ENCODE measurements at regions of chr2 and their contacts with region 1.

Region 1: DNA sequence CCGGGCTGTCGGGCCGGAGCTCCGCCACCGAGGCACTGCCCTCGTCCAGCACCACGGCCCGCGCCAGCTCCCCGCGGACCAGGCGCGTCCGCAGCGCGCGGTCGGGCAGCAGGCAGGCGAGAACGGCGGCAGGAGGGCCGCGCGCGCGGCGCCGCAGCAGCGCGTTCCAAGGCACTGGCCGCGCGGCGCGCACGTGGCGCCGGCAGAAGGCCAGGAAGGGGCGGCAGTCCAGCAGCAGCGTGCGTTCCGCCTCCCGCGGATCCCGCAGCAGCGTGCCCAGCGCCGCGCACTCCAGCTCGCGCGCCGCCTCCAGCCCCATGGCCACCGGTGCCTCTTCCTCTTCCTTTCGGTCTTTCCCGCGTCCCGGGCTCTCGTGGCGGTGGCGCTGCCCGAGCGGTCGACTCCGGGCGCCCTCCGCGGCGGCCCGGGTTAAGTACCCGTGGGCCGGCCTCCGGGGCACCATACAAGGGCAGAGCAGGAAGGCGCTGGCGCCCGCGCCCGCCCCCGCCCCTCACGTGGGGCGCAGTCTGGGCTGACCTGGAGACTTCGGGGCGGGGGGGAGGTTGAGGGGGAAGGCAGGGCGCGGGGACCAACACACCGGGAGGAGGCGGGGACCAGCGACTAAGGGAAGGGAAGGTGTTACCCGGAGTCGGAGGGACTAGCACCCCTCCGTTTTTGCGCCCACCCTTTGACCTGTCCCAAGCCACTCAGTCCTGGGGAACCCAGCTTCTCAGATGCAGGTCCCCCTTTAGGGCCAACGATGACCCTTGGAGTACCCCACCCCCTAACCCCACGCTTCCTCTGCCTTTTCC is at the start of gene DUSP2:
- DNase-seq: peak; percentile 83
- H3K4me3 Mint-ChIP-seq: peak within 1 kb of the TSS; percentile 95
- H3K27ac Mint-ChIP-seq: peak within 1 kb of the TSS; percentile 97
- H3K4me1 Mint-ChIP-seq: peaks cover 49% of the 10 kb centered on the region
- H3K27me3 Mint-ChIP-seq: no peaks in the 10 kb centered on the region
- total RNA-seq, gene DUSP2: 238 and 260 TPM in 2 replicates

Region 2: GRCh38 chr2:95578539-95578938 is 566.7 kb before region 1 on chr2:
- intact Hi-C with region 1: no loop called
- DNase-seq: no peak
- H3K4me3 Mint-ChIP-seq: no peak overlapping the region
- H3K27ac Mint-ChIP-seq: no peak overlapping the region
- H3K4me1 Mint-ChIP-seq: no peaks in the 10 kb centered on the region
- H3K27me3 Mint-ChIP-seq: peaks cover 36% of the 10 kb centered on the region

Region 3: DNA sequence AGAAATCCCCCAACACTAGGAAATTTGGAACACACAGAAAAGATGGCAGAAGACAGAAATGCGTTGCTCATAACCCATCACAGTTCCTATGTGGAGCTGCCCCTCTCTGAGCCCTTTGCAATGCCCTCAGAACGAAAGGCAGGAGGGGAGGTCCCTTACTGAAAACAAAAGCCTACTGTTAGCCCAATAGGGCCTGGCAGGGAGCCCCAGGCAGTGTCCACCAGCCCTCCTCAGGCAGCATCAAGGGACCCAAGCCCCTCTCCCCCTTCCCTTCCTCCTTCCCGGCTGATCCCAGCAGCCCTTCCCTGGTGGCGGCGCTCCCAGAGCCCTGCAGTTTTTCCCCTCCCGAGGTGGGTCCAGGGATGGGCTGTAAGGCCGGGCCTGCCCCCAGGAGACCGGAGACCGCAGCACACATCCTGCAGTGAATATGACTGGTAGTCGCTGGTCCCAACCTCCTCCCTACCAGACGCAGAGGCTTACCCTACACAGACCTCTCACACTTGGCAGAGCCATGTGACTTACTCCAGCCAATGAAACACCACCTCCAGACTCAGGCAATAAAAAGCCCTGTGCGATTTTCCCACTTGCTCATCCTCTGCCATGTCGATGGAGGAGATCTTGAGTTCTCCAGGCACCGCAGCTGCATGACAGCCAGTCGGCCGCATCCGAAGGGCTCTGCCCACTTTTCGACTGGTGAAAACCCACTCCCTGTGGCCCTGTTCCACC is 19.4 kb after region 1 on chr2:
- intact Hi-C with region 1: loop called (anchors 1 kb)
- DNase-seq: peak; percentile 66
- H3K4me3 Mint-ChIP-seq: peak overlapping the region; percentile 83
- H3K27ac Mint-ChIP-seq: peak overlapping the region; percentile 99
- H3K4me1 Mint-ChIP-seq: peaks cover 60% of the 10 kb centered on the region
- H3K27me3 Mint-ChIP-seq: no peaks in the 10 kb centered on the region

Region 4: DNA sequence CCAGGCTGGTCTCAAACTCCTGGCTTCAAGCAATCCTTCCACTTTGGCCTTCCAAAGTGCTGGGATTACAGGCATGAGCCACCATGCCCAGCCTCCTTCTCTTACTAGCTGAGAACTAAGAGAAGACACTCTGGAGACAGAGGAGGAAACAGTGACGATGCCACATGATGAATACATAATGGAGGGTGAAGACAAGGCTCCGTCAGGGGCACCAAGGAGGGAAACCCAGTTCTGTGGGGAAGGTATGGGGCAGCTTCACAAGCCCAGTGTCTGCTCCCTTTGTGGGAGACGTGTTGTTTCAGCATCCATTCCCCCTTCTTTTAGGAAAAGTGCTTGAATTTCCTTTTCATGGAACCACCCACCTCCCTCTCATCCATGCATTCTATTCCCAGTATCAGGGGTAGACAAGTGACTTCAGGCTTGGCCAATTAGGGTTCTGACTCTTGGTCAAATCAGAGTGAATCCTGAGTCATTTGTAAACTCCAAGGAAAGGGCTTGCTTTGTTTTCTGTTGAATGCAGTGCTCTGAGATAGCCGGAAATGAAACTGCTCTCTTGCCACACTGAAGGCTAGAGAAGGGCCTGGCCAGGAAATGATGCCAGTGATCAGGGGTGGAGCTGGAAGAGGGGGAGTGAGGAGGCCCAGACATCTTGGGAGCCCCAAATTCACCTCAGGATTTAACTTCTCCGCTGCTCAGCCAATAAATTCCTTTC is 96.8 kb after region 1 on chr2:
- intact Hi-C with region 1: loop called (anchors 5 kb)
- DNase-seq: peak; percentile 57
- H3K4me3 Mint-ChIP-seq: peak overlapping the region; percentile 62
- H3K27ac Mint-ChIP-seq: peak overlapping the region; percentile 92
- H3K4me1 Mint-ChIP-seq: peaks cover 46% of the 10 kb centered on the region
- H3K27me3 Mint-ChIP-seq: no peaks in the 10 kb centered on the region

Region 5: DNA sequence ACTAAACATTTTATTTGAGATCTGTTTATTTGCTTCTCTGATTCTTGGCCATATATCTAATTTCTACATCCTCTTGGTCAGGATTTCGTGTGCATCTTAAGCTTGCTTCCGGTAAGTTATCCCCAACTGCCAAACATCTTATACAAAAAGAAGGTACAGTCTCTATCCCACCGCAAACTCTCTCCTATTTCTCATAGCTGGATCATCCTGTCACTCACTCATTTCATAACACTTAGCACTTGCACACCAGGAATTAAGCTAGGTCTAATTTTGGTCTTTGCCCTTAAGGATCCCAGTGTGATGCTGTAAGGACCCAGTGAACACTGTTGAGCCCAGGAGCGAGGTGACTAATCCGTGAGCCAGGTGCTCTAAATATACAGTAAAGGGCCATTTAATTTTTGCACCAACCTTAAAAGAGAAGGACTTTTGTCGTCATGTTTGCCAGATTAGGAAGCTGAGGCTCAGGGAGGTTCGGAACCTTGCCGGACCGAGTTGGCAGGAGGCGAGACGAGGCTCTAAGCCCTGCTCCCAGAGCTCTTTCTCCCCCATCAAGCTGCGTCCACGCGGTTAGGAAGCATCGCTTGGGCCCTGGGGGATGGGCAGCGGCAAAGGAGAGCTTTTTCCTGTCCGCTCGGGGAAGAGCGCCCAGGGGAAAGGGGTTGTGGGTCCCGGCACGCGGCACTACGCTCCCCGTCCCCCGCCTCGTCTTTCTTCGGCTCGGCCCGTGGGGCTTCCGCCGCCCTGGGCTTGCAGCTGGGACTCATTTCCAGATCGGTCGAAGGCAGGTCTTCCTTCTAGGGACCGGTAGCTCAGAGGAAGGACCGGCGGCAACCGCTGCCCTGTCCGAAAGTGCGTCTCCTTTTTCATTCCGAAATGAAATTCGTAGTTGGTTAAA is 175.7 kb after region 1 on chr2:
- intact Hi-C with region 1: loop called (anchors 5 kb)
- DNase-seq: no peak
- H3K4me3 Mint-ChIP-seq: peak overlapping the region; percentile 88
- H3K27ac Mint-ChIP-seq: peak overlapping the region; percentile 86
- H3K4me1 Mint-ChIP-seq: peaks cover 54% of the 10 kb centered on the region
- H3K27me3 Mint-ChIP-seq: no peaks in the 10 kb centered on the region

Region 6: DNA sequence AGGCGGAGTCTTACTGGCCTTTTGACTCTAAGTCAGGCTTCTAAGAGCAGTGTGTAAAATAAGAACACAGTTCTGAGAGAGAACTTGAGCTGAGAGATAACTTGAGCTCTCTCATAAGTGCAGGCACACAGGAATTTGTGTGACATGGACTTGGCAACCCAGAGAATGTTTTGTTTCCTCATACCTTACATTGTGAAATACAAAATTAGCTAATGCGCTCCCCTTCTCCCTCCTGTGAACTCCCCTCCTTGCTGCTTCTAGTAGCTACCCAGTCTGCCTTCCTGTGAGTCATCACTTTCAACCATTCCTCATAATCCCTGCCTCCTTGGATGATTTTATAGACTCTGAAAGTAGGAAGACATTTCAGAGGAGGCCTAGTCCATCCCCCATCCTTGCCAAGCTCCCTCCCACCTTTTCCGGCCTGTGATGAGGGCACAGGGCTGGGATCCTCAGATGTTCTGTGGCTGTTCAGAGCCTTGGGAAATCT is 519.9 kb after region 1 on chr2:
- intact Hi-C with region 1: no loop called
- DNase-seq: no peak
- H3K4me3 Mint-ChIP-seq: no peak overlapping the region
- H3K27ac Mint-ChIP-seq: no peak overlapping the region
- H3K4me1 Mint-ChIP-seq: no peaks in the 10 kb centered on the region
- H3K27me3 Mint-ChIP-seq: no peaks in the 10 kb centered on the region

Region 7: DNA sequence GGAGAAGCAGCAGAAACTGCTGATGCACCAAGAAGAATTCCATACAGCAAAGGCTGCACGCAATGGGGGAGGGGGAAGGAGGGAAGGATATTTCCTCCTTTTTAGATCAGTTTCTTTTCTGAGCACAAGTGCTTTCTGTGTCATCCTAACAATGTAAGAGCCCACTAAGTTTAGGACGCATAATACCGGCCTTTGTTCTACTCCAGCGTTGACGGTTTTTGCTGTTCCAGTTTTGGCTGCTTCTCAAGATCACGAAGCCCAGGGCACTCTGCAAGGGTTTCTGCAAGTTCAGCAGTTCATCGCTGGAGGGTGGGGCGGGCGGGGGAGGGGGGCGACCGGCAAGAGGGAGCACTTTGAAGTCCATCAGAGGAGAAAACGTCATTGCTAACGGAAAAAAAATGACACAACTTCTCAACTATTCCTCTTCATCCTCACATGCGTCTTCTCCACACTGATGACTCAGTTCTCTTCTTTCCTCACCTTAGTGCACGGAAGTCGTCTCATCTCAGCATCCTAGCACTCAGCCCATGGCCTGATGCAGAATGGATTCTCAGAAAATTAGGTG is 832.5 kb after region 1 on chr2:
- intact Hi-C with region 1: no loop called
- DNase-seq: no peak
- H3K4me3 Mint-ChIP-seq: peak overlapping the region; percentile 13
- H3K27ac Mint-ChIP-seq: no peak overlapping the region
- H3K4me1 Mint-ChIP-seq: peaks cover 12% of the 10 kb centered on the region
- H3K27me3 Mint-ChIP-seq: no peaks in the 10 kb centered on the region

Measured in activated T-helper 2 cell treated with anti-CD3 and anti-CD28 coated beads, Interferon-gamma antibody, Interleukin-2, Interleukin-4, amounts not matched to agents 10 μg/mL and 5 μg/mL and 100 μg/mL, durations not matched to agents 14 hours and 24 hours and 36 hours (primary cell).